ENCODE measurements at regions of chr15 and their contacts with region 1.

Region 1: DNA sequence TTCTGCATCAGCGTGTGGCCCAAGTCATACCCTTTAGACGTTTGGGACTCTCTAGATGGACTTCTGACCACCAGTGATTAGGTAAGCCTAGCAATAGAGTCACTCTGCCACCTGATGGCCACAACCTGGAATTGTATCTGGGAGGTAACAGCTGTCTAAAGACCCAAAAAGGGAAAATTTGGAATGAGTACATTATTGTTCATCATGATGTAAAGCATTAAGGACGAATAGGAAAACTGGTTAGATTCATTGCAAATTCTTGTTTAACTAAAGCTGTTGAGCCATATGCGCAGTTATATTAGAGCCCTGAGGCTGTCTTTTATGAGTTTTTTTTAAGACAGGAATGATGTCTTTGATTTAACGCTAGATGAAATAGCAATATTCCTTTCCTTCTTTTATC is 63.6 kb downstream of the FAM81A start:
- DNase-seq: no peak
- H3K4me3 Mint-ChIP-seq: no peak overlapping the region
- H3K27ac Mint-ChIP-seq: no peak overlapping the region
- H3K4me1 Mint-ChIP-seq: no peaks in the 10 kb centered on the region
- H3K27me3 Mint-ChIP-seq: peaks cover 16% of the 10 kb centered on the region

Region 2: GRCh38 chr15:58957101-58957973 is 544.3 kb before region 1 on chr15:
- intact Hi-C with region 1: loop called (anchors 1 kb)
- DNase-seq: peak; percentile 45
- H3K4me3 Mint-ChIP-seq: no peak overlapping the region
- H3K27ac Mint-ChIP-seq: no peak overlapping the region
- H3K4me1 Mint-ChIP-seq: peaks cover 17% of the 10 kb centered on the region
- H3K27me3 Mint-ChIP-seq: peaks cover 11% of the 10 kb centered on the region

Region 3: DNA sequence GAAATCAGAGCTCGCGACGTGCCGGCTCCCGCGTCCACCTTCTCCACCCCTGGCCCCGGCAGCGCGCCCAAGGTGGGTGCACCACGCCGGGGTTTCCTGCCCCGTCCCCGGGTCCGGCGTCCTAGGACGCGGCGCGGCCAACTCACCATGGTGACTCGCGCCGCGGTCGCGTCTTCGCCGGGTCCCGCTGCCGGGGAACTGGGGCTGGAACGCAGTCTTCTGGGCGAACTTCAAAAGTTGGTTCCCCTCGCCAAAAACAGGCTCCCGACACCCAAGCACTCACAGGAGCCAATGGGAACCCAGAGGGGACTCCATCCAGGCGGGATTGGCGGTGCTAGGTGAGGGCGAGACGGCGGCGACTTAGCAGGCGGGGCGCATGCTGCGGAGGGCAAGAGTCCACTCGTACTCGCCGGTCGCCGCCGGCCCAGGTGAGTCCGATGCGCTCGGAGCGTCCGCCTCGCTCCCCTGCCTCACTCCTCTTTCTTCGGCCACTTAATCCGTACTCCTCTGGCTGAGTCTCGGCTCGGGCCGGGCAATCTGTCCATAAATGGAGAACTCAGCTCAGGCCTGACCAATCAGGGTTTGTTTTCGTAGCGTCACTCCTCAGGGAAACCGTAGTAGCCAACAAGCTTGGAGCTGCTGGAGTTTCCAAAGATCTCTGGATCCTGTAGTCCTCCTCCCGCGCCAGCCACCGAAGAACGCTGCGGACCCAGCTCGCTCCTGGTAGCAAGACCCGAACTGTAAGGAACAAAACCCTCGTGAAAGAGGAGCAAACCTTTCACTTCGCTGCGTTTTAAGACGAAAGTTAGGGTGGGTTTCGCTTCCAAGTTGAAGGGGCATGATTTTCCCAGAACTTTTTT is 129.0 kb before region 1 on chr15 and contains the start of gene MYO1E:
- intact Hi-C with region 1: no loop called
- DNase-seq: peak; percentile 34
- H3K4me3 Mint-ChIP-seq: peak within 1 kb of the TSS; percentile 96
- H3K27ac Mint-ChIP-seq: peak within 1 kb of the TSS; percentile 79
- H3K4me1 Mint-ChIP-seq: peaks cover 42% of the 10 kb centered on the region
- H3K27me3 Mint-ChIP-seq: peaks cover 31% of the 10 kb centered on the region
- total RNA-seq, gene MYO1E: 33.3 and 33.6 TPM in 2 replicates

Measured in activated T-helper 1 cell treated with anti-CD3 and anti-CD28 coated beads, Interleukin-12 subunit alpha, Interleukin-12 subunit beta, Interleukin-2, Interleukin-4 antibody, amounts not matched to agents 30 ng/mL and 10 ng/mL and 1 ng/mL, durations not matched to agents 14 hours and 24 hours and 36 hours (primary cell).